Astrocyte of the cerebellum (primary cell): ENCODE measurements at regions of chr2 and their contacts with region 1.

Region 1: GRCh38 chr2:38740851-38741731 is 10.1 kb downstream of the SRSF7 start:
- DNase-seq: peak; percentile 60
- H3K4me3 ChIP-seq: no peak overlapping the region
- CTCF ChIP-seq: peak; percentile 28

Region 2: GRCh38 chr2:38074764-38075509 is 666.2 kb before region 1 on chr2:
- in situ Hi-C with region 1: loop called (anchors 25 kb)
- DNase-seq: no peak
- H3K4me3 ChIP-seq: peak overlapping the region; percentile 57
- CTCF ChIP-seq: no peak

Region 3: DNA sequence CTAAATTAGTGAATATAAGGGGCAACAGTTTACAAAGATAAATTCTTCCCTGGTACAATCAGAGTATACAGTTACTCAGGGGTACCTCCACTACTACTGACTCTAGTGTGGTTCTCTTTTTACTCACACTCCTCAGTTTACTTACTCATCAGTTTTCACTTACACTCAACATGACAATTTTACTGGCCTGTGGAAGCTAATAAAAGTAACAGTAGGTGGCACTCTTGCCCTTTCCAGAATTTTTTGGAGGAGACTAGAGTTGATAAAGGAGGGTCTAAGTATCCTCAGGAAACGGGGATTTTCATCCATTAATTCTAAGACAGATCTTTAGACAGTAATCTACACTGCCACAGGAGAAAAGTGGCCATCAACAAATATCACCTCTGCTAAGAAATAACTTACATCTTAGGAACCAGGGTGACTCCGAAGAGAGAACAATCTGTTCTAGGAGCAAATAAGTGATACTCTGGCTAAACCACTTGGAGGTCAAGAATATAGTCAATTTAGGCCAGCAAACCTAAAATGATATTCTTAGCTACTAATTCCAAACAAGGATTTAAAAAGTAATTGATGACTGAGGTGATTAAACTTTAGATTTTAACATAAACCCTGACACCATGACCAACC is 425.3 kb before region 1 on chr2:
- in situ Hi-C with region 1: loop called (anchors 25 kb)
- DNase-seq: peak; percentile 52
- H3K4me3 ChIP-seq: no peak overlapping the region
- CTCF ChIP-seq: peak; percentile 72

Region 4: GRCh38 chr2:38572167-38572566 is 168.9 kb before region 1 on chr2:
- in situ Hi-C with region 1: loop called (anchors 5 kb)
- DNase-seq: no peak
- H3K4me3 ChIP-seq: no peak overlapping the region
- CTCF ChIP-seq: no peak

Region 5: GRCh38 chr2:38648107-38648761 is 92.9 kb before region 1 on chr2:
- in situ Hi-C with region 1: no loop called
- DNase-seq: no peak
- H3K4me3 ChIP-seq: no peak overlapping the region
- CTCF ChIP-seq: no peak

Region 6: GRCh38 chr2:38665854-38666555 is 75.1 kb before region 1 on chr2 and contains the start of gene GALM:
- in situ Hi-C with region 1: no loop called
- DNase-seq: peak; percentile 88
- H3K4me3 ChIP-seq: peak within 1 kb of the TSS; percentile 58
- CTCF ChIP-seq: no peak

Region 7: GRCh38 chr2:38709567-38710194 is 31.4 kb before region 1 on chr2:
- in situ Hi-C with region 1: no loop called
- DNase-seq: no peak
- H3K4me3 ChIP-seq: no peak overlapping the region
- CTCF ChIP-seq: no peak

Region 8: DNA sequence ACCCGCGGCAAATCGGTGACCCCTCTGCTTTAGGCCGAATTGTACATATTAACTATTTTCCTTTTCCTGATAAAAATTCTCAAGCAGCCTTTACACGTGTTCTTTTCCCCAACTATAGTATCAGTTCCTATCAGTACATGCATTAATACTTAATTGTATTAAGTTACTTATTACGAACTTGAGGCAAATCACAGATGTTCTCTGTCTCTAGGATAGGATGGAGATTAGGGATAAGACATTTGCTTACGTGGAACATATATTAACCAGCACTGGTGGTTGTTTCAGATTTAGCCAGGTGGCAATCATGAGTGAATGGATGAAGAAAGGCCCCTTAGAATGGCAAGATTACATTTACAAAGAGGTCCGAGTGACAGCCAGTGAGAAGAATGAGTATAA is 37.6 kb after region 1 on chr2:
- in situ Hi-C with region 1: no loop called
- DNase-seq: no peak
- H3K4me3 ChIP-seq: peak overlapping the region; percentile 54
- CTCF ChIP-seq: no peak